Activated CD4-positive, alpha-beta memory T cell treated with anti-CD3 and anti-CD28 coated beads, Interleukin-2, amount 10 ng/mL, durations not matched to agents 7 days and 5 days (primary cell): ENCODE measurements at regions of chr17 and their contacts with region 1.

Region 1: DNA sequence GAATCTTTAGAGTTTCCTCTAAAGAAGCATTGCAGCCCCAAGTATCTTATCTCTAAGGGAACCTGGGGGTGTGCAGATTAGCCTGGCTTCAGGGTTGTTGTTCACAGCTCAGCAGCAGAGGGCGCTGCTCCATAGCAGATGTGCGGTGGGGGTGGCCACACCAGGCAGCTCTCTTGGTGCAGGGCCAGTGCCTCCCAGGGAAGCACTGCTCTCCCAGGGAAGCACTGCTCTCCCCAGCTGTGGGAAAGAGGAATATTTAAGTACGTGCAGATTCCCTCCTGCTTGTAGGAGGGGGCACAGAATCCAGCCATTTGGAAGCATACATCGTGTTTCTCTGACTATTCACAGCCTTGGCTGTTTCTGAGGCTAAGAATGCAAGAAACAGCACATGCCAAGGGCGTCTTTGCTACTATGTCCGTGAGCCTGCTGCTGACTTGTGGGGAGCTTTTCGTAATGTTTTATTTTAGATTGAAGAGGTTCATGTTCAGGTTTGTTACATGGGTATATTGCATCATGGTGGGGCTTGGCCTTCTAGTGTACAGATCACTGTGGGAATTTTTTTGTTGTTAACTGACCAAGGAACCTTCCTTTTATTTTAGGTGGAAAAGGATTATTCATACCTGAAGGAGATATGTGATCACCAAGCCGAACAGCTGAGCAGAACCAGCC is 217.8 kb downstream of the SPECC1 start:
- DNase-seq: peak; percentile 82
- H3K4me3 Mint-ChIP-seq: no peak overlapping the region
- H3K27ac Mint-ChIP-seq: no peak overlapping the region
- H3K4me1 Mint-ChIP-seq: peaks cover 12% of the 10 kb centered on the region
- H3K27me3 Mint-ChIP-seq: no peaks in the 10 kb centered on the region

Region 2: DNA sequence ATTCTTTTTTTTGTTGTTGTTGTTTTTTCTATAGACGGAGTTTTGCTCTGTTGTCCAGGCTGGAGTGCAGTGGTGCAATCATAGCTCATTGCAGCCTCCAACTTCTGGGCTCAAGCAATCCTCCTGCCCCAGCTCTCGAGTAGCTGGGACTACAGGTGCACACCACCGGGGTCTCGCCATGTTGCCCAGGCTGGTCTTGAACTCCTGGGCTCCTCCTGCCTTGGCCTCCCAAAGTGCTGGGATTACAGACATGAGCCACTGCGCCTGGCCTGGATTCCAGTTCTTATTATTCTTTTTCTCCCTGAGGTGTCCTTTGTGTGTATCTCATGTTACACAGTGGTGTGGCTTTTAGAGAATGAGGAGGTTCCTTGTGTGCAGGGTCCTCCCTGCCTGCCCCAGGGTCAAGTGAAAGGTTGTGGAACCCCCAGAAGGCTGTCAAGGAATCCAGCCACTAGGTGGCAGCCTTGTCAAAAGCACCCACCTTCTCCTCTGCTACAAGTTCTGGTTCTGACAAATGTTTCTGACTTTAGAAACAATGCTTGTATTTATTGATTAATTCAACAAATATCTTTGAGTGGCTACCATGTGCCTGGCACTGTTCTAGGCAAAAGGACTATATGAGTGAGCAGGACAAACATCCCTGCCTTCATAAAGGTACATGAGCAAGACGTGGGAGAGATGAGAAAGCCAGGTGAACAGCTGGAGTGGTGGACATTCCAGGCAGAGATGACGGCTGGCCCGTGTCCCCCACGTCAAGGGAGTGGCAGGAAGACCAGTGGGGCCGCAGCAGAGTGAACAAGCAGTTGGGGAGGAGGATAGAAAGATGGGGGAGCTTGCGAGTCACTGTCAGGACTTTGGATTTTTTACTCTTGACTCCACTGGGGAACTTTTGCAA is 105.3 kb before region 1 on chr17:
- CTCF ChIA-PET with region 1: interaction called, 15 read pairs
- POLR2A ChIA-PET with region 1: no interaction called
- DNase-seq: peak; percentile 65
- H3K4me3 Mint-ChIP-seq: no peak overlapping the region
- H3K27ac Mint-ChIP-seq: no peak overlapping the region
- H3K4me1 Mint-ChIP-seq: peaks cover 2% of the 10 kb centered on the region
- H3K27me3 Mint-ChIP-seq: peaks cover 6% of the 10 kb centered on the region

Region 3: GRCh38 chr17:20155258-20156195 is 71.4 kb before region 1 on chr17:
- CTCF ChIA-PET with region 1: no interaction called
- POLR2A ChIA-PET with region 1: no interaction called
- DNase-seq: peak; percentile 96
- H3K4me3 Mint-ChIP-seq: no peak overlapping the region
- H3K27ac Mint-ChIP-seq: no peak overlapping the region
- H3K4me1 Mint-ChIP-seq: peaks cover 4% of the 10 kb centered on the region
- H3K27me3 Mint-ChIP-seq: peaks cover 15% of the 10 kb centered on the region

Region 4: GRCh38 chr17:20315821-20316220 is 88.9 kb after region 1 on chr17:
- CTCF ChIA-PET with region 1: interaction called, 38 read pairs
- POLR2A ChIA-PET with region 1: no interaction called
- DNase-seq: no peak
- H3K4me3 Mint-ChIP-seq: no peak overlapping the region
- H3K27ac Mint-ChIP-seq: no peak overlapping the region
- H3K4me1 Mint-ChIP-seq: peaks cover under 1% of the 10 kb centered on the region
- H3K27me3 Mint-ChIP-seq: no peaks in the 10 kb centered on the region